Uterus (tissue), 4 donors: ENCODE measurements at regions of chr3 and their contacts with region 1.

Region 1: GRCh38 chr3:179562591-179563270 is at the start of gene ACTL6A:
- DNase-seq: peak; percentile 100
- H3K4me3 ChIP-seq: peak within 1 kb of the TSS; percentile 71 to 93
- H3K27ac ChIP-seq: peak within 1 kb of the TSS; percentile 81 to 85
- H3K4me1 ChIP-seq: peaks cover 4 to 9% of the 10 kb centered on the region in 2 donors
- H3K27me3 ChIP-seq: no peaks in the 10 kb centered on the region
- CTCF ChIP-seq: peak in 1 of 4 experiments; percentile 26
- POLR2A ChIP-seq: peak; percentile 63 to 68
- total RNA-seq, gene ACTL6A: 38.7 to 84.5 (median 51.2) TPM

Region 2: GRCh38 chr3:179451265-179452175 is 111.2 kb before region 1 on chr3 and contains the start of gene GNB4:
- intact Hi-C with region 1: loop called (anchors 10 kb)
- DNase-seq: peak; percentile 69 to 79
- H3K4me3 ChIP-seq: peak within 1 kb of the TSS; percentile 59 to 75
- H3K27ac ChIP-seq: peak within 1 kb of the TSS; percentile 92 to 95
- H3K4me1 ChIP-seq: no peaks in the 10 kb centered on the region
- H3K27me3 ChIP-seq: no peaks in the 10 kb centered on the region
- CTCF ChIP-seq: peak in 1 of 4 experiments; percentile 13
- POLR2A ChIP-seq: peak; percentile 47 to 59
- total RNA-seq, gene GNB4: 18.2 to 110 (median 47.8) TPM